ENCODE measurements at regions of chr12 and their contacts with region 1.

Region 1: GRCh38 chr12:120292661-120293531 is at the start of gene RNU4-1:
- DNase-seq: peak; percentile 99
- ATAC-seq: peak; percentile 50
- H3K4me3 ChIP-seq: peak within 1 kb of the TSS; percentile 66
- H3K27ac ChIP-seq: peak within 1 kb of the TSS; percentile 91
- H3K4me1 ChIP-seq: peaks cover 14% of the 10 kb centered on the region
- H3K27me3 ChIP-seq: no peaks in the 10 kb centered on the region
- CTCF ChIP-seq: no peak
- total RNA-seq, gene RNU4-1: under 0.01 TPM in 2 replicates

Region 2: GRCh38 chr12:118372541-118373495 is 1920.1 kb before region 1 on chr12 and contains the start of gene TAOK3:
- CTCF ChIA-PET with region 1: no interaction called
- POLR2A ChIA-PET with region 1: interaction called, 20 read pairs
- intact Hi-C with region 1: no loop called
- DNase-seq: peak; percentile 99
- ATAC-seq: peak; percentile 84
- H3K4me3 ChIP-seq: peak within 1 kb of the TSS; percentile 96
- H3K27ac ChIP-seq: peak within 1 kb of the TSS; percentile 47
- H3K4me1 ChIP-seq: peaks cover 29% of the 10 kb centered on the region
- H3K27me3 ChIP-seq: no peaks in the 10 kb centered on the region
- CTCF ChIP-seq: no peak
- total RNA-seq, gene TAOK3: 15.9 and 27.9 TPM in 2 replicates

Region 3: GRCh38 chr12:119998471-119999245 is 294.2 kb before region 1 on chr12:
- CTCF ChIA-PET with region 1: no interaction called
- POLR2A ChIA-PET with region 1: no interaction called
- intact Hi-C with region 1: no loop called
- DNase-seq: no peak
- ATAC-seq: no peak
- H3K4me3 ChIP-seq: no peak overlapping the region
- H3K27ac ChIP-seq: no peak overlapping the region
- H3K4me1 ChIP-seq: no peaks in the 10 kb centered on the region
- H3K27me3 ChIP-seq: no peaks in the 10 kb centered on the region
- CTCF ChIP-seq: no peak

Region 4: DNA sequence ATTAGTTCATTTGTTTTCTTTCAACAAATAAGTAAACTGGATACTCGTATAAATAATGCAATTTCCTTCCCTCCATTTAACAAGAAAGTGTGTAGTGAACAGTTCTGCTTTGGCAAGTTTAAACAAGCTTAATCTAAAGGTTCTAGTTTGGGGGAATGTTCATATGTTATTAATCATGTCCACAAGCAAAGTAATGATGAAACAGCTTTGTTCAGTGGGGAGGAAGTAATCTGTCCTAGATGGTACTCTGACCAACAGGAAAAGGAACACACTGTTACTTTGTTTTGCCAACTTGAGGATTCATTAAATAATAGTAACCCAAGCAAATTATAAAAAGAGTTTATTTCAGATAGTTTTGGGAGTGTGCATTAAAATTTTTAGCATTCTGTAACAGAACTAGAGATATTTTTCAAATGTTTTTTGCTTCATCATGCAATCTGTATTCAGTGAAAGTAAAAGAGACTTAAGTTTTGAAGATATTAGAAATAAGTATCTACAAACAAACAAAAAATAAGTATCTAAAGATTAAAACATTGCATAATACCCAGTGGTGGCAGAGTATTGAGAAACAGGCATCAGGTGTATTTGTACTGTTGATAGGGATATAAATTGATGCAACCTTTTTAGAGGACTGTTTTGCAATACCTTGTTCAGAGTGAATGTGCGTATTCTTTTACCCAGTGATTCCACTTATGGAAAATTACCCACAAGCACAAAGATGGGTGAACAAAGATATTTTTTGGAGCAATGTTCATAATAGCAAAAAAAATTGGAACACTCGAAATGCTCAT is 237.5 kb before region 1 on chr12:
- CTCF ChIA-PET with region 1: no interaction called
- POLR2A ChIA-PET with region 1: no interaction called
- intact Hi-C with region 1: no loop called
- DNase-seq: peak; percentile 26
- ATAC-seq: no peak
- H3K4me3 ChIP-seq: no peak overlapping the region
- H3K27ac ChIP-seq: no peak overlapping the region
- H3K4me1 ChIP-seq: no peaks in the 10 kb centered on the region
- H3K27me3 ChIP-seq: no peaks in the 10 kb centered on the region
- CTCF ChIP-seq: no peak

Region 5: GRCh38 chr12:120199595-120200306 is 93.1 kb before region 1 on chr12:
- CTCF ChIA-PET with region 1: interaction called, 26 read pairs
- POLR2A ChIA-PET with region 1: interaction called, 45 read pairs
- intact Hi-C with region 1: no loop called
- DNase-seq: peak; percentile 52
- ATAC-seq: no peak
- H3K4me3 ChIP-seq: peak overlapping the region; percentile 76
- H3K27ac ChIP-seq: peak overlapping the region; percentile 67
- H3K4me1 ChIP-seq: peaks cover 54% of the 10 kb centered on the region
- H3K27me3 ChIP-seq: no peaks in the 10 kb centered on the region
- CTCF ChIP-seq: no peak

Region 6: GRCh38 chr12:120234643-120235368 is 58.1 kb before region 1 on chr12:
- CTCF ChIA-PET with region 1: interaction called, 6 read pairs
- POLR2A ChIA-PET with region 1: interaction called, 72 read pairs
- intact Hi-C with region 1: no loop called
- DNase-seq: peak; percentile 99
- ATAC-seq: peak; percentile 29
- H3K4me3 ChIP-seq: peak overlapping the region; percentile 21; the same call in 1 of the 2 replicates
- H3K27ac ChIP-seq: peak overlapping the region; percentile 93
- H3K4me1 ChIP-seq: peaks cover 84% of the 10 kb centered on the region
- H3K27me3 ChIP-seq: no peaks in the 10 kb centered on the region
- CTCF ChIP-seq: peak; percentile 61

Region 7: GRCh38 chr12:120265473-120266179 is 27.3 kb before region 1 on chr12 and contains the start of gene PXN:
- CTCF ChIA-PET with region 1: interaction called, 6 read pairs
- POLR2A ChIA-PET with region 1: interaction called, 73 read pairs
- intact Hi-C with region 1: loop called (anchors 1 kb)
- DNase-seq: peak; percentile 89
- ATAC-seq: peak; percentile 41
- H3K4me3 ChIP-seq: peak within 1 kb of the TSS; percentile 91
- H3K27ac ChIP-seq: peak within 1 kb of the TSS; percentile 91
- H3K4me1 ChIP-seq: peaks cover 28% of the 10 kb centered on the region
- H3K27me3 ChIP-seq: no peaks in the 10 kb centered on the region
- CTCF ChIP-seq: peak; percentile 83
- total RNA-seq, gene PXN: 313 and 413 TPM in 2 replicates

Region 8: GRCh38 chr12:120317224-120318105 is 24.6 kb after region 1 on chr12:
- CTCF ChIA-PET with region 1: no interaction called
- POLR2A ChIA-PET with region 1: interaction called, 5 read pairs
- intact Hi-C with region 1: loop called (anchors 1 kb)
- DNase-seq: peak; percentile 100
- ATAC-seq: peak; percentile 98
- H3K4me3 ChIP-seq: peak overlapping the region; percentile 73
- H3K27ac ChIP-seq: peak overlapping the region; percentile 39
- H3K4me1 ChIP-seq: peaks cover 11% of the 10 kb centered on the region
- H3K27me3 ChIP-seq: no peaks in the 10 kb centered on the region
- CTCF ChIP-seq: peak; percentile 84

Region 9: DNA sequence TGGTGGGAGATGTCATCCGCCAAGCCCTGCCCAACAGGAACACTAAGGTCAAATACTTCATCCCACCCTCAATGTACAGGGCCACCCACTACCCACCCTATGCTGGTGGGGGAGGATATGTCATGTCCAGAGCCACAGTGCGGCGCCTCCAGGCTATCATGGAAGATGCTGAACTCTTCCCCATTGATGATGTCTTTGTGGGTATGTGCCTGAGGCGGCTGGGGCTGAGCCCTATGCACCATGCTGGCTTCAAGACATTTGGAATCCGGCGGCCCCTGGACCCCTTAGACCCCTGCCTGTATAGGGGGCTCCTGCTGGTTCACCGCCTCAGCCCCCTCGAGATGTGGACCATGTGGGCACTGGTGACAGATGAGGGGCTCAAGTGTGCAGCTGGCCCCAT is 1914.1 kb after region 1 on chr12:
- CTCF ChIA-PET with region 1: no interaction called
- POLR2A ChIA-PET with region 1: interaction called, 10 read pairs
- intact Hi-C with region 1: no loop called
- DNase-seq: no peak
- ATAC-seq: no peak
- H3K4me3 ChIP-seq: no peak overlapping the region
- H3K27ac ChIP-seq: no peak overlapping the region
- H3K4me1 ChIP-seq: no peaks in the 10 kb centered on the region
- H3K27me3 ChIP-seq: no peaks in the 10 kb centered on the region
- CTCF ChIP-seq: no peak